Activated naive CD4-positive, alpha-beta T cell treated with anti-CD3 and anti-CD28 coated beads for 36 hours (primary cell): ENCODE measurements at regions of chr19 and their contacts with region 1.

Region 1: GRCh38 chr19:4342615-4343369 is 570 bp upstream of the MPND start:
- DNase-seq: peak; percentile 97
- H3K4me3 Mint-ChIP-seq: peak overlapping the region; percentile 94
- H3K27ac Mint-ChIP-seq: peak overlapping the region; percentile 94
- H3K4me1 Mint-ChIP-seq: peaks cover 27% of the 10 kb centered on the region
- H3K27me3 Mint-ChIP-seq: no peaks in the 10 kb centered on the region

Region 2: DNA sequence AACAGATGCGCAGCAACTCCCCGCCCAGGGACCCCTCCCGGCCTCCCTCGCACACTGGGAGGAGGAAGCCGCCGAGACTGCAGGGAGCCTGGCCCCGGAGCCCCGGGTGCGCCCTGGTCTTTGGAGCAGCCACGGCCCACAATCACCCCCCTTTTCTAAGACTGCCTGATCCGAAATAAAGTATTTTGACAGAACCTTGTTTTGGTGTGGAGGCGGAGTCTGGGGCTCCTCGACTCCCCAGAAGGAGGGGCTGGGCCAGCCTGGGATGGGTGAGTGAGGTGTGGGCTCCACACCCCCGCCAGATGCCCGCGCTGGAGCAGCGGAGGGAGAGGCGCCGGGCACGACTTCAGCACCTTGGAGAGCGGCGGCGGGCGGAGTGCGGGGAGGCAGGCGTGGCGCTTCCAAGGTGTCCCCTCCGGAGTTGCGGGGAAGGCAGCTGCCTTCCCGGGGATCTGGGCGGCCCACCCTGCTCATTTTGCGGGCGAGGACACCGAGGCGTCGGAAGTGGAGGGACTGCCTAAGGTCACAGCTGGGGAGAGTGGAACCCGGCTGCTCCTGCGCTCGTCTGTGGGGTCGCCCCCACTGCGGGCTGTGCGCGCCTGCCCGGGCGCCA is 169.8 kb before region 1 on chr19:
- CTCF ChIA-PET with region 1: no interaction called
- intact Hi-C with region 1: no loop called
- DNase-seq: peak; percentile 71
- H3K4me3 Mint-ChIP-seq: no peak overlapping the region
- H3K27ac Mint-ChIP-seq: no peak overlapping the region
- H3K4me1 Mint-ChIP-seq: peaks cover 3% of the 10 kb centered on the region
- H3K27me3 Mint-ChIP-seq: peaks cover 15% of the 10 kb centered on the region

Region 3: GRCh38 chr19:4304530-4305252 is 38.1 kb before region 1 on chr19 and contains the start of gene FSD1:
- CTCF ChIA-PET with region 1: interaction called, 3 read pairs
- intact Hi-C with region 1: loop called (anchors 1 kb)
- DNase-seq: peak; percentile 79
- H3K4me3 Mint-ChIP-seq: peak within 1 kb of the TSS; percentile 71
- H3K27ac Mint-ChIP-seq: peak within 1 kb of the TSS; percentile 84
- H3K4me1 Mint-ChIP-seq: peaks cover 34% of the 10 kb centered on the region
- H3K27me3 Mint-ChIP-seq: no peaks in the 10 kb centered on the region
- total RNA-seq, gene FSD1: 12.3 to 17.5 TPM

Region 4: GRCh38 chr19:4328243-4328990 is 14.4 kb before region 1 on chr19:
- CTCF ChIA-PET with region 1: interaction called, 4 read pairs
- intact Hi-C with region 1: loop called (anchors 1 kb)
- DNase-seq: peak; percentile 97
- H3K4me3 Mint-ChIP-seq: peak overlapping the region; percentile 87
- H3K27ac Mint-ChIP-seq: peak overlapping the region; percentile 84
- H3K4me1 Mint-ChIP-seq: peaks cover 27% of the 10 kb centered on the region
- H3K27me3 Mint-ChIP-seq: no peaks in the 10 kb centered on the region

Region 5: DNA sequence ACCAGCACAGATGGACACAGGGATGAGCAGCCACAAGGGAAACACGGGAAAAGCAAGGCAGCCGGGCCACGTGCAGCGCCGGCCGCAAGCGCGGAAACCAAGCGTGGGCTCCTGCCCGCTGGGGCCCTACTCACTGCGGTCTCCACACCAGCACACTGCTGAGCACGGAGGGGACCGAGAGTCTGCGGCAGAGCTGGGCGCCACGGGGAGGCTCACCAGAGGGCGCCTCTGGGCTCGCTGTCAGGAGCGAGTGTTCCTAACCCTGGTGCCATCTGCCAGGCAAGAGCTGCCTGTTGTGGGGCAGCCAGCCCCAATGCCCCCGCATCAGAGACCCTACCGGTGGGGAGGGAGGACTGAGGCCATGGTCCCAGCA is 27.1 kb after region 1 on chr19:
- CTCF ChIA-PET with region 1: interaction called, 5 read pairs
- intact Hi-C with region 1: loop called (anchors 1 kb)
- DNase-seq: peak; percentile 81
- H3K4me3 Mint-ChIP-seq: peak overlapping the region; percentile 78
- H3K27ac Mint-ChIP-seq: peak overlapping the region; percentile 96
- H3K4me1 Mint-ChIP-seq: peaks cover 43% of the 10 kb centered on the region
- H3K27me3 Mint-ChIP-seq: no peaks in the 10 kb centered on the region

Region 6: GRCh38 chr19:4482721-4483364 is 140.1 kb after region 1 on chr19:
- CTCF ChIA-PET with region 1: no interaction called
- intact Hi-C with region 1: no loop called
- DNase-seq: no peak
- H3K4me3 Mint-ChIP-seq: no peak overlapping the region
- H3K27ac Mint-ChIP-seq: no peak overlapping the region
- H3K4me1 Mint-ChIP-seq: no peaks in the 10 kb centered on the region
- H3K27me3 Mint-ChIP-seq: no peaks in the 10 kb centered on the region